Right ventricle myocardium inferior (tissue), 1 donor: ENCODE measurements at regions of chr2 and their contacts with region 1.

Region 1: GRCh38 chr2:64562148-64562784 is 38.1 kb downstream of the AFTPH start:
- DNase-seq: no peak
- ATAC-seq: no peak

Region 2: DNA sequence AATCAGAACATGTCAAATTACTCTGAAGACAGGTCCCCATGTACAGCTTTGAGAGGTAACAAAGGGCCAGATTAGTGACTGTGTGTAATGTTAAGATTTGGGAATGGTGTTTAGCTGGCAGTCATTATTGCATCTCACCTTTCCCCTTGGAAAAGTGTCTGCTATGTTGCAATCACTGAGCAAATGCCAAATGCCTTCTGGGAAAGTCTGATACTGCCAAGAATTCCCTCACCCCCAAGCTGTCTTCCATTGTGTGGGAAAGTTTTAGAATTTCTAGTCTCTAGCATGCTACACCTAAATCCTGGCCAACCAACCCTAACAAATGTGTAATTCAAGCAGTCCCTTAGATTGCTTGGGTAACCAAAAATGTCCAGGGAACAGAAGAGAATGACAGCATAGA is 404.5 kb before region 1 on chr2:
- intact Hi-C with region 1: no loop called
- DNase-seq: no peak
- ATAC-seq: peak; percentile 54

Region 3: GRCh38 chr2:64488050-64488974 is 74.0 kb before region 1 on chr2:
- intact Hi-C with region 1: loop called (anchors 2 kb)
- DNase-seq: peak; percentile 77
- ATAC-seq: no peak